ENCODE measurements at regions of chr16 and their contacts with region 1.

Region 1: DNA sequence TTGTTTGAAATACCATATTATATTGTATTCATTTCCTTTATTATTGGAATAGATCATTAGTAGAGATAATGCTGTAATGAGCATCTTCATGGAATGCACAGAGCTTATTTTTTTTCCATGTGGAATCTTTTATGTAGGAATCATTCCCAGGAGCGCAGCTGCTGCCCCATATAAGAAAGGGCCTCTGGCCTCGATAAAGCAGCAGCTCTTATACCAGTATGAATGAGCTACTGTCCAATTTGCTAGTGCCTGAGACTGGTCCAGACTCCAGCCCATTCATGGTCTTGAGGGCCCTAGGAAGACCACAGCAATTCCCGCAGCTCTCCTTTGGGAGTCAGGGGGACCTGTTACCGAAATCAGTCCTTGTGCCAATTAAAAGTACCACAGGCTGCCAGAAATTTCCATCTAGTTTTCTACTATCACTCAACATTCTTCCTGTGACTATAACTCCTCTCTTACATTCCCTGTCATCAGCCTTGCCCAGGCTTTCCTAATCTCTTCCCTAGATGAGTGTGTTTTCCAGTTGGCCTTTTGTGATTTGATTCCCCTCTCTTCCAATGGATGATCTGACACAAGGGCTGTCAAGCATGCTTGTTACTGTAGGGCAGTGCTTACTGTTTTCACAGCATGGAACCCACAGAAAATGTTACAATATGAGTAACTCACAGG is 1.9 kb downstream of the ZNF843 start:
- H3K4me3 Mint-ChIP-seq: no peak overlapping the region
- H3K27ac Mint-ChIP-seq: no peak overlapping the region
- H3K4me1 Mint-ChIP-seq: peaks cover 17% of the 10 kb centered on the region
- H3K27me3 Mint-ChIP-seq: peaks cover 5% of the 10 kb centered on the region

Region 2: GRCh38 chr16:30934827-30935557 is 505.7 kb before region 1 on chr16:
- intact Hi-C with region 1: loop called (anchors 10 kb)
- H3K4me3 Mint-ChIP-seq: peak overlapping the region; percentile 33
- H3K27ac Mint-ChIP-seq: peak overlapping the region; percentile 77
- H3K4me1 Mint-ChIP-seq: peaks cover 36% of the 10 kb centered on the region
- H3K27me3 Mint-ChIP-seq: no peaks in the 10 kb centered on the region

Region 3: GRCh38 chr16:30984669-30985400 is 455.8 kb before region 1 on chr16 and contains the start of gene HSD3B7:
- intact Hi-C with region 1: loop called (anchors 2 kb)
- H3K4me3 Mint-ChIP-seq: peak within 1 kb of the TSS; percentile 86
- H3K27ac Mint-ChIP-seq: peak within 1 kb of the TSS; percentile 88
- H3K4me1 Mint-ChIP-seq: peaks cover 41% of the 10 kb centered on the region
- H3K27me3 Mint-ChIP-seq: no peaks in the 10 kb centered on the region

Region 4: DNA sequence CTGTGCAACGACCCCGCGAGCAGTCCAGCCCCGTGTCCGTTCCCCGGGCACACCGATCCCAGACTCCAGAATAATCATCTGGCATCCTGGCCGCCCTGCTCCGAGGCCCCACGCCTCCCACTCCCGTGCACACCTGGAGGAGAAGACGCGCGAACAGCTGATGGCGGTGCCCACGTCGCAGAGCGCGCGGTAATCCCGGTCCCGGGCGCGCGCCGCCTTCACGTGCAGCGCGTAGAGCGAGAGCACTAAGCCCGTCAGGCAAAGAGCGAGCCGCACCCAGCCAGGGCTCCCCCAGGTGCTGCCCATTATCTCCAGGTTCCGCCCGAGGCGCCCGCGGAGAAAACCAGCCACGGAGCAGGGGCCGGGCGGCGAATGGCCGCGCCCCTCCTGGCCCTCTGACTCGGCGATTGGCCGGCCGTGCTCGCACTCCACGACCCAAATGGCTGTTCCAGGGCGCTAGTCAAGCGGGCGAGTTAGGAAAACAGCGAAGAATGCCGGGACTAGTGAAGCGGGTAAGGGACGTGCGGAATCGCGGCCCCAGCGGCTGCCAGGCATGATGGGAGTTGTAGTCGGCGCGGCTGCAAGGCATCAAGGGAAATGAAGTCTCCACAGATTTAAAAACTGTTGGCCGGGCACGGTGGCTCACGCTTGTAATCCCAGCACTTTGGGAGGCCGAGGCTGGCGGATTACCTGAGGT is 346.1 kb before region 1 on chr16 and contains the start of gene VKORC1:
- intact Hi-C with region 1: loop called (anchors 10 kb)
- H3K4me3 Mint-ChIP-seq: peak within 1 kb of the TSS; percentile 88
- H3K27ac Mint-ChIP-seq: peak within 1 kb of the TSS; percentile 83
- H3K4me1 Mint-ChIP-seq: peaks cover 37% of the 10 kb centered on the region
- H3K27me3 Mint-ChIP-seq: no peaks in the 10 kb centered on the region

Region 5: DNA sequence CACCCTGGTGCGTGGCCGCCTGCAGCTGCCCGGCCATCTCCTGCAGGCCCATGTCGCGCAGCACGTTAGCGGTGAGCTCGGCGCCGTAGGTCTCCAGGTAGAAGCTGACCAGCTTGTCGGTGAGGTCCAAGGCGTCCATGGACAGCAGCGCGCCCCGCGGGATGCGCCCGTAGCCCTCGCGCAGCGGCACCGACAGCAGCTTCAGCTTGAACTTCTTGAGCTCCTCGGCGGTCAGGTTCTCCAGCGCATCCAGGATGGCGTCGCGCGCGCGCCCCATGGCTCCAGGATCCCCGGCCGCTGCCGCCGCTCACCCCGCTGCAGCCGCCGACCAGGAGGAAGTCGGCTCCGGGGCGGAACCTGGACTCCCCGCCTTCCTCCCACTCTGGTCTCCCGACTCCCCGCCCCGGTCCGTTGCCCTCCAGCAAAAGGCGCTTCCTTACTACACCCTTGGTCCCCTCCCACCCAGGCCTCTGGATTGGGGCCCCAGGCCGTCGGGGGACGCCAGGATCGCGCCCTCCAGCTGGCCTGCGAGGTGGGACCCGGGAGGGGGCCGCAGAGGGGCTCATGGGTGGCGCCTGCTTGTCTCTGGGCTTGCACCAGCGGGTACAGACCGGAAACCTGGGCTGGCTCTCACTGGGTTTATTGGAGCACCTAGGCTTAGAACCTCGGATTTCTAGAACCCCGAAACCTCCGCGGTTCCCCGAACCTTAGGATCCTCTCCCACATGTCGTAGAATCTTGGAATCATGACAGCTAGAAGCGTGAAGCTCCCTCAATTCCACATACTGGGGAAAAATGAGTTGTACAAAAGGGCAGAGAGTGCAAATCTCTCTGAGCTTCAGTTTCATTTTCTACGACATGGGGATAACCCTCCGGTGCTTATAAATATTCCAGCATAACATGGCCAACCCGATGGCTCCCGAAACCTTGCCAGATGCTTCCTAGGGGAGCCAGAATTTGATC is 238.0 kb before region 1 on chr16 and contains the start of gene PYCARD:
- intact Hi-C with region 1: loop called (anchors 10 kb)
- H3K4me3 Mint-ChIP-seq: peak within 1 kb of the TSS; percentile 87
- H3K27ac Mint-ChIP-seq: peak within 1 kb of the TSS; percentile 84
- H3K4me1 Mint-ChIP-seq: peaks cover 75% of the 10 kb centered on the region
- H3K27me3 Mint-ChIP-seq: peaks cover 8% of the 10 kb centered on the region

Region 6: DNA sequence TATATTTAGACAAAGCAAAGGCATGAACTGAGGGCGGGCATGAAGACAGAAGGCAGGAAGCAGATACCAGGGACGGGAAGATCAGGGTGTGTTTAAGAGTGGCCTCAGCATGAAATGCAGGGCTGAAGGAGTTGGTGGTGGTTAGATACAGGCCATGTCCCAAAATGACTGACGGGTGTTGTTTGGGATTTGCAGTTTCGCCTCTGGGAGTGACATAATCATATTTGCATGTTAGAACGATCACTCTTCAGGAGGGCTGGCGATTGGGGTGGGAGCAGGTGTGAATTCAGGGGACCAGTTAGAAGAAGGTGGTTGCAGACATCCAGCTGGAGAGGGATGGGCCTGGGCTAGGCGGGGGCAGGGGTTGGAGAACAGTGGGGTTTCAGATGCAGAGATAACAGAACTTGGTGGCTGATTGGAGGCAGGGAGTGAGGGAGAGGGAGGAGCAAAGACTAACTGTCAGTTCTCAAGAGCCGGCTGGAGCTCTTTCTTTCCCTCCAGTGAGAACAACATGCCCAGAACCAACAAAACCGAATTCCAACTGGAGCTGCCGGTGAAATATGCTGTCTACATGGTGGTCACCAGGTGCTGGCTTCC is 112.9 kb before region 1 on chr16:
- intact Hi-C with region 1: loop called (anchors 10 kb)
- H3K4me3 Mint-ChIP-seq: no peak overlapping the region
- H3K27ac Mint-ChIP-seq: peak overlapping the region; percentile 33
- H3K4me1 Mint-ChIP-seq: peaks cover 52% of the 10 kb centered on the region
- H3K27me3 Mint-ChIP-seq: no peaks in the 10 kb centered on the region

Region 7: DNA sequence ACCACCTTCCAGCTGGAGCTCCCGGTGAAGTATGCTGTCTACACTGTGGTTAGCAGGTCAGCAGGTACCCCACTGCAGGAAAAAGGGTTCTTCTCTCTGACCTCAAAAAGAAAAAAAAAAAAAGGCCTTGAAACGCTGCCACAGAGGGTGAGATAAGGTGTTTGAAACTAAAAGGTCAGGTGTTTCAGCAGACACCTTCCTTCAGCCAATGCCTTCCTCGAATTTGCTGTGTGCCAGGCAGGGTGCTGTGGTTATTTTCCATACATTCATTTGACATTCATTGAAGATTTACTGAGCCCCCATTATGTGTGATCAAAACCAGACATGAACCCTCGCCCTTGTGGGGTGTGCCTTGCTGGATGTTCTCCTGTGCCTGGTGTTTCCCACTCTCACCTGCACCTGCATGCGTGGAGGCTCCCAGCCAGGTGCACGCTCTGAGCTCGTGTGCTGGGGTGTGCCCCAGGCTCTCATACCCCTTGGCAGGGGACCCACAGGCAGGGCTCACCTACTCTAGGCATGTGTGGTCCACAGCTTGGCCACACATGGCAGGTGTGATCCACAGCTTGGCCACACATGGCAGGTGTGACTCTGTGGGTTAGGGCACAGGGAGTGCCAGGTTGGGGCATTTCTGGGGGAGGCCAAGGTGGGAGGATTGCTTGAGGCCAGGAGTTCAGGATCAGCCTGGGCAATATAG is 63.3 kb before region 1 on chr16:
- intact Hi-C with region 1: loop called (anchors 5 kb)
- H3K4me3 Mint-ChIP-seq: no peak overlapping the region
- H3K27ac Mint-ChIP-seq: no peak overlapping the region
- H3K4me1 Mint-ChIP-seq: peaks cover 41% of the 10 kb centered on the region
- H3K27me3 Mint-ChIP-seq: no peaks in the 10 kb centered on the region

Region 8: GRCh38 chr16:31427441-31428278 is 13.0 kb before region 1 on chr16:
- intact Hi-C with region 1: no loop called
- H3K4me3 Mint-ChIP-seq: peak overlapping the region; percentile 69
- H3K27ac Mint-ChIP-seq: no peak overlapping the region
- H3K4me1 Mint-ChIP-seq: peaks cover 9% of the 10 kb centered on the region
- H3K27me3 Mint-ChIP-seq: peaks cover 37% of the 10 kb centered on the region

Region 9: GRCh38 chr16:31477220-31478216 is 36.9 kb after region 1 on chr16:
- intact Hi-C with region 1: no loop called
- H3K4me3 Mint-ChIP-seq: peak overlapping the region; percentile 67
- H3K27ac Mint-ChIP-seq: peak overlapping the region; percentile 73
- H3K4me1 Mint-ChIP-seq: peaks cover 45% of the 10 kb centered on the region
- H3K27me3 Mint-ChIP-seq: peaks cover 52% of the 10 kb centered on the region